Activated CD8-positive, alpha-beta T cell treated with anti-CD3 and anti-CD28 coated beads, Interleukin-2, amount 10 ng/mL, durations not matched to agents 7 days and 5 days (primary cell): ENCODE measurements at regions of chr1 and their contacts with region 1.

Region 1: GRCh38 chr1:204162231-204163074 is 3.7 kb downstream of the REN start:
- DNase-seq: peak; percentile 81
- ATAC-seq: peak; percentile 94
- H3K4me3 Mint-ChIP-seq: no peak overlapping the region
- H3K27ac Mint-ChIP-seq: no peak overlapping the region
- H3K4me1 Mint-ChIP-seq: no peaks in the 10 kb centered on the region
- H3K27me3 Mint-ChIP-seq: peaks cover 6% of the 10 kb centered on the region

Region 2: GRCh38 chr1:204151552-204152309 is 10.7 kb before region 1 on chr1 and contains the start of gene ETNK2:
- CTCF ChIA-PET with region 1: interaction called, 11 read pairs
- POLR2A ChIA-PET with region 1: no interaction called
- DNase-seq: peak; percentile 31
- ATAC-seq: peak; percentile 79
- H3K4me3 Mint-ChIP-seq: peak within 1 kb of the TSS; percentile 55
- H3K27ac Mint-ChIP-seq: no peak within 1 kb of the TSS
- H3K4me1 Mint-ChIP-seq: peaks cover 3% of the 10 kb centered on the region
- H3K27me3 Mint-ChIP-seq: peaks cover 28% of the 10 kb centered on the region
- total RNA-seq, gene ETNK2: 0.11 TPM in 1 of 2 experiments, not detected in the other

Region 3: GRCh38 chr1:204177133-204177532 is 14.7 kb after region 1 on chr1:
- CTCF ChIA-PET with region 1: interaction called, 19 read pairs
- POLR2A ChIA-PET with region 1: no interaction called
- DNase-seq: no peak
- ATAC-seq: no peak
- H3K4me3 Mint-ChIP-seq: no peak overlapping the region
- H3K27ac Mint-ChIP-seq: no peak overlapping the region
- H3K4me1 Mint-ChIP-seq: no peaks in the 10 kb centered on the region
- H3K27me3 Mint-ChIP-seq: peaks cover 2% of the 10 kb centered on the region

Region 4: DNA sequence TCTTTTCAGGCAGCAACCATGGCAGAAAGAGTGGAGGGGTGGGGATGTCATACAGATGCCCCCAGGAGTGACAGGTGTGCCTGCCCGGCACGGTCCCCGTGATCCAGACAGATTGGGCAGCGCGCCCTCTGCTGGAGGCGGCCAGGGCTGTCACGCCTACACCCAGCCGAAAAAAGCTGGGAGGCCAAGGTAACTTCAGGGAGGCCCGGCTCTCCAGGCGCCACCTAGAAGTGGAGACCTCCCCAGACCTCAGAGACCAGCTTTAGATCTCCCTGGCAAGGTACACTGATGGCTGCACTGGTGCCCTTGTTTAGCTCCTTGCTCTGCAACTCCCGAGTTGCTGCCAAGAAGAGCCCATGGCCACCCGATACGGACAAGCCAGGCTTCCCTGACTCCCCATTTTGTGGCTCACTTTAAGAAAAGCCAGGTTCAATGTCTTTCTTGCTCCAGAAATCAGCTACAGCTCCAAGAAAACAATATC is 44.7 kb after region 1 on chr1:
- CTCF ChIA-PET with region 1: interaction called, 44 read pairs
- POLR2A ChIA-PET with region 1: interaction called, 3 read pairs
- DNase-seq: peak; percentile 79
- ATAC-seq: peak; percentile 99
- H3K4me3 Mint-ChIP-seq: no peak overlapping the region
- H3K27ac Mint-ChIP-seq: no peak overlapping the region
- H3K4me1 Mint-ChIP-seq: no peaks in the 10 kb centered on the region
- H3K27me3 Mint-ChIP-seq: peaks cover 47% of the 10 kb centered on the region